ENCODE measurements at regions of chr22 and their contacts with region 1.

Region 1: DNA sequence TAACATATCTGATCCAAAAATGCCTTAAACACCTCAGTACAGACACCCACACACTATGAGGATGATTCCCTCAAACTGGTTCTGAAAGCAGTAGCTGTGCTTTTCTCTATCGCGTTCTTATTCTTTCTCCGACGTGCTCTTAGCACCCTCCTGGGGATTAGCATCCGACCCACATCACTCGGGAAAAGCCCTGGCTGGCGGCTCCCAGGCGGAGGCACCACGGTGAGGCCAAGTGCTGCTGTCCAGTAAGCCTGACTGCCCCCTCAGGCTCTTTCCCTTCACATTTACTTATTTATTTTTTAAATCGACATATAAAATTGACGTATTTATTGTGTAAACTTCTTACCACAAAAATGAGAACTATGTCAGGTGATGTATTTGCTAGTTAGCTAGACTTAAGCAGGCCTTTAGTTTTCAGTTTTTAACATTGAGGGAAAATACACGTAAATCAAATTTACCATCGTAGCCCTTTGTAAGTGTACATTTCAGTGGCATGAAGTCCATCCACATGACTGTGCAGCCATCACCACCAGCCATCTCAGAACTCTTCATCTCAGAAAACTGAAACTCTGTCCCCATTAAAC is 19.2 kb downstream of the TBX1 start:
- DNase-seq: peak in 1 of 2 donors; percentile 57
- ATAC-seq: peak; percentile 32 to 81 (median 72)
- H3K4me3 ChIP-seq: no peak overlapping the region
- H3K27ac ChIP-seq: peak overlapping the region; percentile 75
- H3K4me1 ChIP-seq: peaks cover 7% of the 10 kb centered on the region
- H3K27me3 ChIP-seq: no peaks in the 10 kb centered on the region
- CTCF ChIP-seq: no peak

Region 2: DNA sequence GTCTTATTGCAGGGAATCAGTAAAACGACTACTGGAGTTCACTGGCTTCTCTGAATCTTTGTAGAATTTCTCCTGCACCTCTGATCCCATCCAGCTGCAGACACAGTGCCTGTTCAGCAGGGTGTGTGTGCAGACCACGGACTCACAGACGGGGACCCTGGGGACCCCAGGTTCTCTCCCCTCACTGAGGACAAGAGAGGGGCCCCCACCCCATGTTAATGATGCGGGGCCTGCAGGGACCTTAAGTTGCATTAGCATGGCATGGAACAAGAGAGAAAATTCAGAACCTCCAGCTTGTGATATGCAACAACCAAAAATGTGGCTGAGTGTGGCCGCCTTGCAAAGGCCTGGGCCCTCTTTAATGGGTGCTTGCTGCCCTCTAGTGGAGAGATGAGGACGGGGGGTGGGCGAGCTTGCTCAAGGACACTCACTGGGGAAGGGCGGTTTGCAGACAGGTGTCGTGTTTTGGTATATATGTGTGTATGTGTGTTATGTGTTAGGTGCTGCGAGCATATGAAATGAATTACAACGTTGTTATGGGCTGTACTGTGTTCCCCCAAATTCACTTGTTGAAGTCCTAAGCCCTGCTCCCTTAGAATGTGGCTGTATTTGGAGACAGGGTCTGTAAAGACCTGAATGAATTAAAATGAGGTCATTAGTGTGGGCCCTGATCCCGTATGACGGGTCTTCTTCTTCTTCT is 149.9 kb before region 1 on chr22:
- intact Hi-C with region 1: no loop called
- DNase-seq: peak; percentile 73 to 81
- ATAC-seq: peak; percentile 84 to 96 (median 90)
- H3K4me3 ChIP-seq: no peak overlapping the region
- H3K27ac ChIP-seq: no peak overlapping the region
- H3K4me1 ChIP-seq: no peaks in the 10 kb centered on the region
- H3K27me3 ChIP-seq: peaks cover 0 to 9% (median 3%) of the 10 kb centered on the region in 3 donors
- CTCF ChIP-seq: peak; percentile 92

Region 3: GRCh38 chr22:19730655-19731360 is 49.0 kb before region 1 on chr22:
- intact Hi-C with region 1: no loop called
- DNase-seq: peak; percentile 87 to 93
- ATAC-seq: peak; percentile 89 to 97 (median 91)
- H3K4me3 ChIP-seq: peak overlapping the region; percentile 57
- H3K27ac ChIP-seq: no peak overlapping the region
- H3K4me1 ChIP-seq: no peaks in the 10 kb centered on the region
- H3K27me3 ChIP-seq: no peaks in the 10 kb centered on the region
- CTCF ChIP-seq: peak; percentile 95

Region 4: DNA sequence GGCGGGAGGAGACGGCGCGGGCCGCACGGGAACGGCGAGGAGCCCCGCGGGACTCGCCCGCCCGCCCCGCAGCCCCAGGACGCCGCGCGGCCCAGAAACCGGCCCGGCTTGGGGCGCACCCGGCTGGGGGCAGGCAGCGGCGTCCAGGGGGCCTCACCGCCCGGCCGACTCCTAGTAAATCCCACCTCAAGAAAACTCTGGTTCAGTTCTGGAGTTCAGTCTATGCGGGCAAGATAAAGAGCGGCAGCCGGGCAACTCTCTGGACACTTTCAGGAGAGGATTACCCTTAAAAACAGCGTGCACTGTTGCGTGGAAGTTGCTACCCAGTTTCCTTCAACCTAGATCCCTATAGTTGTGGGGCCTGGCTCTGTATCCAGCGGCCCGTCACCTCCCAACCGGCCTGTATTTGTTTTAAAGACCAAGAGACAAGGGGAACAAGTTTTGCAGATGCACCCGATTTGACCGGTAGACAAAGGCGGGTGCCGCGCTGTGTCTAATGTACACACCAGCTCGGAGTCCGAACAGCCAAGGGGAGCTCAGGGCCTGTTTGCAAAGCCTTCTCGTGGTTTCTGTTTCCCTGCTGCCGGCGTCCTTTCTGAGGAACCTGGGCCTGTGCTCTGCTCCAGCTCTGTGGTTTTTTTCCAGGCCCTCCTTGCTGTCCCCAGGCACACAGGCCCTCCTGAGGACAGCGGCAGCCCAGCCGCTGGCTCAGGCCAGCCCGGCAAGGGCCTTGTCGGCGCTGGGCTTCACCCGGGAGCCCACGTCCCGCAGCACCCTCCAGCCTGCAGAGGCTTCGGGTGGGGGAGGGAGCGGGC is 18.1 kb before region 1 on chr22:
- intact Hi-C with region 1: loop called in 1 of 2 experiments (anchors 2 kb)
- DNase-seq: no peak
- ATAC-seq: peak; percentile 30 to 70 (median 59)
- H3K4me3 ChIP-seq: peak overlapping the region; percentile 80
- H3K27ac ChIP-seq: peak overlapping the region; percentile 87
- H3K4me1 ChIP-seq: peaks cover 11% of the 10 kb centered on the region
- H3K27me3 ChIP-seq: peaks cover 0 to 14% (median 0%) of the 10 kb centered on the region in 3 donors
- CTCF ChIP-seq: no peak

Region 5: DNA sequence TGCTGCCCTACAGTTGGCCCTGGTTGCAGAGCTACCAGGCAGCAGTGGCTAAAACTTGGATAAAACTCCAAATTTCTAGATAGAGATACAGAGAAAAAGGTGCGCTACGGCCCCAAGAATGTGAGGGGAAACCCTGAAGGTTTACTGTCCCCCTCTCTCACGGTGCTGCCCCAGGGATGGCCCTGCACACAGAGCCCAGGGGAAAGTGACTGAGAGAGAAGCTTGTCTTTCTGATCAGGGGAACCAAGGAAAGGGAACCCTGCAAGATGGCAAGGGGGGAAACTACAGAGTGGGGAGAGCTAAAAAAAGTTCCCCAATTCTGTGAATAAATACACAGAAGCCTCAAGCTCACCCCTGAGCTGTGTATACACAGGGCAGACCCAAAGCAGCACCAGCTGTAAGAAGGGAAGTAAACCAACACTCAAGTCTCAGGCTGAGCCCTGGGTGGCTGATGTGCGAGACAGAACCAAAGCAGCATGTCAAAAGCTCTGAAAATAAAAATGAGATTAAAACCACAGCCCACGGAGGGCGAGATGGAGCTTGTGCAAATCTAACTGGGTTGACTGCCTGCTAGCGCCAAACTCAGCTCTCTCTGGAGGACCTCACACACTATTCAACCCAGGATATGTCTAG is 52.8 kb after region 1 on chr22:
- intact Hi-C with region 1: no loop called
- DNase-seq: no peak
- ATAC-seq: no peak
- H3K4me3 ChIP-seq: no peak overlapping the region
- H3K27ac ChIP-seq: no peak overlapping the region
- H3K4me1 ChIP-seq: no peaks in the 10 kb centered on the region
- H3K27me3 ChIP-seq: no peaks in the 10 kb centered on the region
- CTCF ChIP-seq: no peak

Measured in psoas muscle (tissue), 8 donors.